ENCODE measurements at regions of chr12 and their contacts with region 1.

Region 1: GRCh38 chr12:107702106-107702505 is 16.5 kb downstream of the PWP1 start:
- DNase-seq: no peak
- H3K4me3 ChIP-seq: no peak overlapping the region
- H3K27ac ChIP-seq: no peak overlapping the region
- H3K4me1 ChIP-seq: no peaks in the 10 kb centered on the region
- H3K27me3 ChIP-seq: no peaks in the 10 kb centered on the region
- CTCF ChIP-seq: no peak

Region 2: DNA sequence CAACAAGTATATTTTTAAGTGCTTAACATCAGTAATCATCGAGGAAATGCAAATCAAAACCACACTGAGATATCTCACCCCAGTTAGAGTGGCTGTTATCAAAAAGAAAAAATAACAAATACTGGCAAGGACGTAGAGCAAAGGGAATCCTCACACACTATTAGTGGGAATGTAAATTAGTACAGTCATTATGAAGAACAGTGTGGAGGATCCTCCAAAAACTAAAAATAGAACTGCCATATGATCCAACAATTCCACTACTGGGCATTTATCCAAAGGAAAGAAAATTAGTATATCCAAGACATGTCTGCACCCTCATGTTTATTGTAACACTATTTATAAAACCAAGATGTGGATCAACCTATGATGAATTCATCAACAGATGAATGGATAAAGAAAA is 165.5 kb before region 1 on chr12:
- CTCF ChIA-PET with region 1: no interaction called
- dilution Hi-C with region 1: no loop called
- in situ Hi-C with region 1: no loop called
- intact Hi-C with region 1: no loop called
- DNase-seq: no peak
- H3K4me3 ChIP-seq: no peak overlapping the region
- H3K27ac ChIP-seq: no peak overlapping the region
- H3K4me1 ChIP-seq: no peaks in the 10 kb centered on the region
- H3K27me3 ChIP-seq: no peaks in the 10 kb centered on the region
- CTCF ChIP-seq: no peak

Region 3: GRCh38 chr12:108526482-108527165 is 824.5 kb after region 1 on chr12:
- CTCF ChIA-PET with region 1: no interaction called
- dilution Hi-C with region 1: no loop called
- in situ Hi-C with region 1: loop called in 1 of 2 experiments (anchors 25 kb)
- intact Hi-C with region 1: no loop called
- DNase-seq: no peak
- H3K4me3 ChIP-seq: no peak overlapping the region
- H3K27ac ChIP-seq: no peak overlapping the region
- H3K4me1 ChIP-seq: no peaks in the 10 kb centered on the region
- H3K27me3 ChIP-seq: no peaks in the 10 kb centered on the region
- CTCF ChIP-seq: no peak